ENCODE measurements at regions of chr3 and their contacts with region 1.

Region 1: DNA sequence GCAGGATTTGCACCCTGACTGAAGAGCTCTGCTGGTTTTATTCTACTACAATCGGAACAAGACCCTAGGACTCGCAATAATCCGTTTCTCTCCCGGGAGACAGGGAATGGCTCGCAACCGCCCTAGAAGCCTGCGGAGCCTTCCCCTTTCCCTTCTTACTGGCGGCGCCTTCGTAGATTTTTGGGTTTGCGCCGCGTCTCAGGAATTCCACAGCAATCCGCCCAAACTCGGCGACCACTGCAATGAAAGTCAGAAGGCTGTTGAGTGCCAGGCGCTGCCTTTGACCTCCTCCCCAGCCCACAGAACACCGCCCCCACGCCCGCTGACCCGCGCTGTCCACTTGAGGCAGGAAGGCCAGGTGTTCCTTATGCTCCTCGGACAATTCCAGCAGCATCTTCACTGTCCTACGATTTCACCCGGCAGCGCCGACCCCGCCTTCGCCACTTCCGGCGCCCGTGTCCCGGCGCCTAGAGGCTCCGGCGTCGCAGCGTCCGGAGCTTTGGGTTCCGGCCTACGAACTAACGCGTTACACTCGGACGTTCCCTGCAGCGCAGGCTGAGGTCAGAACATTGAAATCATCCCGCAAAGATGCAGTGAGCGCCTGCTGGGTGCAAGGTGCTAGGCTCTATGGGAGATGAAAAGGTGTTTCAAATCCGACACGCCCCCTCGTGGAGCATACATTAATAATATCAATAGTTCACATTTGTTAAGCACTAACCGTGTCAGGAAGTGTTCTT is at the start of gene COMMD2:
- DNase-seq: peak; percentile 89
- ATAC-seq: peak; percentile 100
- H3K4me3 Mint-ChIP-seq: peak within 1 kb of the TSS; percentile 86
- H3K27ac Mint-ChIP-seq: peak within 1 kb of the TSS; percentile 93
- H3K4me1 Mint-ChIP-seq: peaks cover 21% of the 10 kb centered on the region
- H3K27me3 Mint-ChIP-seq: no peaks in the 10 kb centered on the region
- CTCF ChIP-seq: peak; percentile 50
- total RNA-seq, gene COMMD2: 31.0 to 31.8 TPM

Region 2: DNA sequence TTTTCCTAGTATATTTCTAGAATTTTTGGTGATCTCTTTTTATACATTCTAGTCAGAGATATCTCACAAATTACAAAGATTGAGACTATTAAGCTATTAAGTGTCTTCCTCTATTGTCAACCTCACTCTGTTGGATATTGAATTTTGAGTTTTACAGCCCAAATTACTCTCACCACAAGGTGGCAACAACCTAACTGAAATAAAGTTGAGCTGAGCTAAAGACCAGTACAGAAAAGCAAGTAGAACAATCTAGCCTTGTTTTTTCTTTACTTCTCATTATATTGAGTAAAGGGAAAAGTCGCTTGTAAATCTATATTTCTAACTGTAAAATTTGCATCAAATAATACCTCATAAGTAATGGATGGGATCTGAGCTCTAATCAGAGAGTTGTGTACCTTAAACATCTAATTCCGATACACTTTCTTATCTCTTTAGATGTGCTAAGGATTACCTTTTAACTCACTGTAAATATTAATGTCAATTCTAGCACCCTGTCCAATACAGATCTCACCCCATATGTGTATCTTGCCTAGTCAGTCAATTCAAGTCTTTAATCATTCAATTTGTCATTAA is 13.6 kb after region 1 on chr3:
- CTCF ChIA-PET with region 1: interaction called, 12 read pairs
- POLR2A ChIA-PET with region 1: no interaction called
- intact Hi-C with region 1: no loop called
- DNase-seq: no peak
- ATAC-seq: no peak
- H3K4me3 Mint-ChIP-seq: no peak overlapping the region
- H3K27ac Mint-ChIP-seq: no peak overlapping the region
- H3K4me1 Mint-ChIP-seq: no peaks in the 10 kb centered on the region
- H3K27me3 Mint-ChIP-seq: peaks cover 13% of the 10 kb centered on the region
- CTCF ChIP-seq: peak; percentile 17